AG04449 (cell line): ENCODE measurements at regions of chr6 and their contacts with region 1.

Region 1: DNA sequence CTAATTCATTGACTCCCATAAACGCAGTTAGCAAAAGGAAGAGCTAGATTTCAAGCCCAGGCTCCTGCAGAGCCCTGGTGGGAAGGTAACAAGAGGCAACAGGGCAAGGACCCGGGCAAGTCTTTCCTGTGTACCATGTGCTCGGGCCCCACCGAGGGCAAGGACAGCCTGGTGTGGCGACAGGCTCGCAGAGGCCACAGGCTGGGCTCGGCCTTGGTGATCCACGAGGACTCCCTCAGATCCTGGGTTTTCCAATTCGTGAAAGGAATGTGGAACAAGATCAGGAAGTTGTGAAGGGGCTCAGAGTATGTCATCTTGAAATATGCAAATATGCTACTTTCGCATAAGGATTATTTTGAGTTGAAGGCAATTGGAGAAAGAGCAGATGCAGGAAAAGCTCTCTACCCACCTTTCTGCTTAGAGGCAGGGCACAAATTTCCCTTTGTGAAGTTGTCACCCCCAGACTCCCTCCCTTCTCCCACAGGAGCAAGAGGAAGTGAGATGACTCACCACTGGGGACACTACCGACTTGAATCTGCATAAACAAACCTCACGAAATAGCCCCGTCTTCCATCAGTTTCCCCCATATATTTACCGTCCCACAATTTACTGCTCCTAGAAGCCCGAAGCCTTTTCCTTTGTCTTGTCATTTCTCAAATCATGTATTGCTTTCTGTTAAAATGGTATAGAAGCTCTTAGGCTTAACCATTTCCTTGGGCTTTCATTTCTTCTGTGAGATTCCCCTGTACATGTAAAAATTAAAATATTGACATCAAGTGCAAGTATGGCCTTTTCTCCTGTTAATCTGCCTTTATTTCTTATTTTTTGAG is 79.0 kb downstream of the PSMG4 start:
- DNase-seq: no peak
- H3K4me3 ChIP-seq: no peak overlapping the region
- CTCF ChIP-seq: no peak

Region 2: GRCh38 chr6:3324262-3324942 is 13.3 kb before region 1 on chr6:
- CTCF ChIA-PET with region 1: interaction called, 13 read pairs
- POLR2A ChIA-PET with region 1: no interaction called
- DNase-seq: peak; percentile 75
- H3K4me3 ChIP-seq: no peak overlapping the region
- CTCF ChIP-seq: no peak